ENCODE measurements at regions of chr1 and their contacts with region 1.

Region 1: GRCh38 chr1:200279810-200280411 is 129.9 kb downstream of the ZNF281 start:
- DNase-seq: peak; percentile 79
- H3K4me3 Mint-ChIP-seq: no peak overlapping the region
- H3K27ac Mint-ChIP-seq: no peak overlapping the region
- H3K4me1 Mint-ChIP-seq: no peaks in the 10 kb centered on the region
- H3K27me3 Mint-ChIP-seq: peaks cover 14% of the 10 kb centered on the region

Region 2: GRCh38 chr1:200062143-200062542 is 217.8 kb before region 1 on chr1:
- intact Hi-C with region 1: no loop called
- DNase-seq: peak; percentile 15
- H3K4me3 Mint-ChIP-seq: no peak overlapping the region
- H3K27ac Mint-ChIP-seq: no peak overlapping the region
- H3K4me1 Mint-ChIP-seq: no peaks in the 10 kb centered on the region
- H3K27me3 Mint-ChIP-seq: peaks cover 18% of the 10 kb centered on the region

Region 3: DNA sequence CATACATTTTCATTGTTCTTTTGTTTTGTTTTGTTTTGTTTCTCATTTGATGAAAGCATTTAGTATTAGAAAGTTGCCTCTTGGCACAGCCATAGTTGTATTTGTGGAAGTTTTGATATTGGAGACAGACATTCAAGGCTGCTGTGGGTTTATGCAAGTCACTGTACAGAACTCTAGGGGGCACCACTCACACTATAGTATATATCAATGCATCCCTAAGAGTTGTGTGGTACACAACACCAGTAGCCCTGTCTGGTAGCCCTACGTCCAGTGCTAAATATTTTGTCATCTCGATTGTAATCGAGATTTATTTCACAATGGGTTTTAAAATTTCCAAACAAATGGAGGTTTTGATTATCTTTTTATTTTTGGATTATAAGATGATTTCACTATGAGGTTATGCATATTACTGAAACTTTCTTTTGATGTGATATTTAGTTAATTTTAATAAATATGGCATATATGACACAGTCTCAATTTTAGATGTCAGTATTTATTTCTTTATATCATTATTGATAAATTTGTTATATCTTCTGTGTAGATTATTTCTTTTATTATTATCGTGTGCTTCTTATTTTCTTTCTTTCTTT is 140.2 kb before region 1 on chr1:
- intact Hi-C with region 1: loop called (anchors 2 kb)
- DNase-seq: peak; percentile 79
- H3K4me3 Mint-ChIP-seq: no peak overlapping the region
- H3K27ac Mint-ChIP-seq: no peak overlapping the region
- H3K4me1 Mint-ChIP-seq: peaks cover 5% of the 10 kb centered on the region
- H3K27me3 Mint-ChIP-seq: peaks cover 9% of the 10 kb centered on the region